CD8-positive, alpha-beta T cell (primary cell): ENCODE measurements at regions of chr10 and their contacts with region 1.

Region 1: DNA sequence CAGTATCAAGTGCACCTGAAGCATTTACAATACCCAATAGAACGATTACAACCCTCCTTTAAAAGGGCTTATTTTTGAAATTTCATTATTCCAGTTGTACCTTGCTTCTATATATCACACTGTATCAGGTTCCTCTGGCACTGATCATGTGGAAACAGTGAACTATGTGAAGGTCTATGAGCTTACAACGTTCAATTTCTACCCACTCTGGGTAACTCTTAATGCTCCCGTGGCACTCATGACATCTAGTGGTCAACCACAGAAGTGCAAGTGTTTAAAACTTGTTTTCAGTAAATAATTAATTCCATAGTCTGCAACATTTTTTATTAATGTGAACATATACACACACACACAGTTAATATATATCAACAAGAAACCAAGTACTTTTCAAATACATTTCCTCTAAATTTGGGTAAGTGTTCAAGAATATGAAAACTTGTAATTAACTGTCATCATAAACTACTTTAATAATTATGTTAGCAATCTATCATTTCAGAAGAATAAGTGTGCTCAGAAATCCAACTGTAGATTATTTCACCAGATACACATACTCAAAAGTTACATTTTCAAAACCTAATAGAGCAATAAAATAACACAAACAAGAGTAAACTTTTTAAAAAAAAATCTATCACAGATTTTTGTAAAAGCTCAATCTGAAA is 61.0 kb downstream of the MPP7 start:
- DNase-seq: peak in 7 of 9 experiments; percentile 12 to 69 (median 23)
- ATAC-seq: peak; percentile 84
- H3K4me3 ChIP-seq: no peak overlapping the region
- H3K4me3 Mint-ChIP-seq: no peak overlapping the region
- H3K27ac ChIP-seq: no peak overlapping the region
- H3K27ac Mint-ChIP-seq: no peak overlapping the region
- H3K4me1 ChIP-seq: peaks cover 15% of the 10 kb centered on the region
- H3K4me1 Mint-ChIP-seq: peaks cover 38% of the 10 kb centered on the region
- H3K27me3 ChIP-seq: no peaks in the 10 kb centered on the region
- H3K27me3 Mint-ChIP-seq: no peaks in the 10 kb centered on the region
- CTCF ChIP-seq: peak; percentile 91

Region 2: GRCh38 chr10:27345455-27345920 is 896.4 kb before region 1 on chr10:
- CTCF ChIA-PET with region 1: no interaction called
- POLR2A ChIA-PET with region 1: no interaction called
- intact Hi-C with region 1: no loop called
- DNase-seq: no peak
- ATAC-seq: no peak
- H3K4me3 ChIP-seq: no peak overlapping the region
- H3K4me3 Mint-ChIP-seq: no peak overlapping the region
- H3K27ac ChIP-seq: no peak overlapping the region
- H3K27ac Mint-ChIP-seq: no peak overlapping the region
- H3K4me1 ChIP-seq: no peaks in the 10 kb centered on the region
- H3K4me1 Mint-ChIP-seq: peaks cover 1% of the 10 kb centered on the region
- H3K27me3 ChIP-seq: no peaks in the 10 kb centered on the region
- H3K27me3 Mint-ChIP-seq: peaks cover 15% of the 10 kb centered on the region
- CTCF ChIP-seq: no peak

Region 3: DNA sequence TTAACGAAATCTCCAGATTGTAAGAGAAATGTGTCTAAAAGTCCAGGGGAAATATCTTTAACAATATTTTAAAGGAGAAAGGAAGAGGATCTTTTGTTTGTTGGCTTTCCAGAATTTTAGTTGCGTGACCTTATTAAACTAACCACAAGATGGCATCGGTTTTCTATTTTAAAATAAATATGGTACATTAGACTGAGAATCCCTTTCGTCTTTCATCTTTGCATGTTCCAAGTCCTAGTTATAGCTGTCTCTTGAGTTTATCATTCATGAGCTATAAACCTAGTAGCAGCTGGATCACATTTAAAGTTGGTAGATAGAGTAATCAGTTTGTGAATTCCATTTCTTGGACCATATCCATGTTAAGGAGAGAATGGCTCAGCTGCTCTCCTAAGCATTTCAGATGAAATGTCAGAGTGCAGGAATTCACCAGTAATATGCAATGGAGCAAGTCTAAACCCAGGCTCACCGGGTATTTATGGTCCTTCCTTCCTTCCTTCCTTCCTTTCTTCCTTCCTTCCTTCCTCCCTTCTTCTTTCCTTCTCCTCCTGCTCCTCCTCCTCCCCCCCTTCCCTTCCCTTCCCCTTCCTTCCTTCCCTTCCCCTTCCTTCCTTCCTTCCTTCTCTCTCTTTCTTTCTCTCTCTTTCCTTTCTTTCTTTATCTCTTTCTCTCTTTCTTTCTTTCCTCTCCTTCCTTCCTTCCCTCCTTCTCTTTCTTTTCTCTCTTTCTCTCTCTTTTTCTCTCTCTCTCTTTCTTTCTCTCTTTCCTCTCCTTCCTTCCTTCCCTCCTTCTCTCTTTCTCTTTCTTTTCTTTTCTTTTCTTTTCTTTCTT is 795.6 kb before region 1 on chr10:
- CTCF ChIA-PET with region 1: interaction called, 3 read pairs
- POLR2A ChIA-PET with region 1: no interaction called
- intact Hi-C with region 1: loop called (anchors 1 to 2 kb)
- DNase-seq: peak in 2 of 9 experiments; percentile 38 to 60
- ATAC-seq: peak; percentile 46
- H3K4me3 ChIP-seq: no peak overlapping the region
- H3K4me3 Mint-ChIP-seq: no peak overlapping the region
- H3K27ac ChIP-seq: no peak overlapping the region
- H3K27ac Mint-ChIP-seq: no peak overlapping the region
- H3K4me1 ChIP-seq: peaks cover 9% of the 10 kb centered on the region
- H3K4me1 Mint-ChIP-seq: peaks cover 21% of the 10 kb centered on the region
- H3K27me3 ChIP-seq: no peaks in the 10 kb centered on the region
- H3K27me3 Mint-ChIP-seq: no peaks in the 10 kb centered on the region
- CTCF ChIP-seq: peak; percentile 61

Region 4: GRCh38 chr10:27742195-27743011 is 499.5 kb before region 1 on chr10:
- CTCF ChIA-PET with region 1: interaction called, 40 read pairs
- POLR2A ChIA-PET with region 1: no interaction called
- intact Hi-C with region 1: loop called (anchors 1 kb)
- DNase-seq: peak; percentile 55 to 85 (median 78)
- ATAC-seq: peak; percentile 82
- H3K4me3 ChIP-seq: peak overlapping the region; percentile 42 to 80
- H3K4me3 Mint-ChIP-seq: peak overlapping the region; percentile 87
- H3K27ac ChIP-seq: no peak overlapping the region
- H3K27ac Mint-ChIP-seq: no peak overlapping the region
- H3K4me1 ChIP-seq: peaks cover 57% of the 10 kb centered on the region
- H3K4me1 Mint-ChIP-seq: peaks cover 43% of the 10 kb centered on the region
- H3K27me3 ChIP-seq: peaks cover 53 to 65% of the 10 kb centered on the region in 2 experiments
- H3K27me3 Mint-ChIP-seq: peaks cover 57% of the 10 kb centered on the region
- CTCF ChIP-seq: peak; percentile 78

Region 5: DNA sequence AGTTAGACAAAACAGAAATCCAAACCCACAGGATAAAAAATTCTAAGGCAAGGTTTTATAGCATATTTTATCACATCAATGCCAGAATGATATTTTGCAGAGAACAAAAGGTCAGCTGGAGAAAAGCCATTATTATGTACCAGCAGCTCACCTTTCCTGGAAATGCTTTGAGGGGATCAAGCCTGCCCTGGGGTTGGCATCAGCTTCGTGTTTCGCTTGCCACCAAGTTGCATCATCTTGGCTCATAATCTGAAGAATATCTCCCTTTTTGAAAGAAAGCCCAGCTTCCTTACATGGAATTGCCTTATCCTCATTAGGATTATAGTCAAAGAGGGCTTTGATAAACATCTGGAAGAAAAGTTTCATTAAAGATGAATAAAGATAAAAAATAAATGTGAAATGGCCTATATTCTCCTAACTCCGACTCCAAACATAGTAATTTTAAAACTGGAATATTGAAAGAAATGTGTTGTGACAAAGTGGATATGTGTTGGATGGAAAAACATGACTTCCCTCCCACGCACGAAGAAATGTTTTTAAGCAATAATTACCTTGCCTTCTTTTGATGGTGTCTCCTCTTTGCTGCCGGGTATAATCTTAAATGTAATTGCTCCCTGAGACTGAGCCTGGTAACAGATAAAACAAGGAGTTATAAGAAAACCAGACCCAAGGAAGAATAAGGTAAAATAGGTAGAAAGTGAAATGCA is 121.7 kb before region 1 on chr10:
- CTCF ChIA-PET with region 1: no interaction called
- POLR2A ChIA-PET with region 1: no interaction called
- intact Hi-C with region 1: no loop called
- DNase-seq: no peak
- ATAC-seq: no peak
- H3K4me3 ChIP-seq: no peak overlapping the region
- H3K4me3 Mint-ChIP-seq: no peak overlapping the region
- H3K27ac ChIP-seq: no peak overlapping the region
- H3K27ac Mint-ChIP-seq: no peak overlapping the region
- H3K4me1 ChIP-seq: no peaks in the 10 kb centered on the region
- H3K4me1 Mint-ChIP-seq: no peaks in the 10 kb centered on the region
- H3K27me3 ChIP-seq: no peaks in the 10 kb centered on the region
- H3K27me3 Mint-ChIP-seq: no peaks in the 10 kb centered on the region
- CTCF ChIP-seq: no peak

Region 6: GRCh38 chr10:28151636-28152035 is 90.2 kb before region 1 on chr10:
- CTCF ChIA-PET with region 1: no interaction called
- POLR2A ChIA-PET with region 1: interaction called, 11 read pairs
- intact Hi-C with region 1: no loop called
- DNase-seq: no peak
- ATAC-seq: no peak
- H3K4me3 ChIP-seq: no peak overlapping the region
- H3K4me3 Mint-ChIP-seq: no peak overlapping the region
- H3K27ac ChIP-seq: no peak overlapping the region
- H3K27ac Mint-ChIP-seq: no peak overlapping the region
- H3K4me1 ChIP-seq: no peaks in the 10 kb centered on the region
- H3K4me1 Mint-ChIP-seq: peaks cover 4% of the 10 kb centered on the region
- H3K27me3 ChIP-seq: no peaks in the 10 kb centered on the region
- H3K27me3 Mint-ChIP-seq: no peaks in the 10 kb centered on the region
- CTCF ChIP-seq: no peak

Region 7: DNA sequence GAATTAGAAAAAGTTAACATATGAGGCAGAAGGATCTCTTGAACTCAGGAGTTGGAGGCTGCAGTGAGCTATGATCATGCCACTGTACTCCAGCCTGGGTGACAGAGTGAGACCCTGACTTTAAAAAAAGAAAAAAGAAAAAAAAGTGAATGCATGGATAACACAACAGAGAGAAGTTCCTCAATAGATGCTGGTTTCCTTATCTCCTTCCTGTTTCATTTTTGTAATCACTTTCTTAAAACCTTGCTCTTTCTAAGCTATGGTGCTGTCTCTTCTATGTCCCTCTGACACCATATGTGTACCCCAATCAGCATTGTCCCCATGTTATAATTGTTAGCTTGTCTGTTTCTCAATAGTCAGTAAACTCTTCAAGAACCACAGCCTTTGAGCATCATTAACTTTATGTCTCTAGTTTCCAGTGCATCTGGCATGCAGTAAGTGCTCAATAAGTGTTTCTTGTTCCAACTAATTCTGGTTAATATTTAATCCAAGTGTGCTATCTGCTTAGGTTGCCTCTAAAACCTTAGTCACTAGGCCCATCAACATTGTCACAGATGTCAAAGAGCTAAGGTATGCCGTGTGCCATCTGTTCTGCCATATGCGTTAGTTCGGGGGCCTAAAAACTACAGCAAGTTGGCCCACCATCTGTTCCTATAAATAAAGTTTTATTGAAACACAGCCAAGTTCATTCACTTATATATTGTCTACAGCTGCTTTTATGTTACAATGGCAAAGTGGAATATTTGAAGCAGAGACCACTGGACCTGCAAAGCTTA is 24.8 kb after region 1 on chr10:
- CTCF ChIA-PET with region 1: interaction called, 10 read pairs
- POLR2A ChIA-PET with region 1: interaction called, 3 read pairs
- intact Hi-C with region 1: no loop called
- DNase-seq: no peak
- ATAC-seq: no peak
- H3K4me3 ChIP-seq: no peak overlapping the region
- H3K4me3 Mint-ChIP-seq: no peak overlapping the region
- H3K27ac ChIP-seq: no peak overlapping the region
- H3K27ac Mint-ChIP-seq: no peak overlapping the region
- H3K4me1 ChIP-seq: no peaks in the 10 kb centered on the region
- H3K4me1 Mint-ChIP-seq: peaks cover 32% of the 10 kb centered on the region
- H3K27me3 ChIP-seq: no peaks in the 10 kb centered on the region
- H3K27me3 Mint-ChIP-seq: no peaks in the 10 kb centered on the region
- CTCF ChIP-seq: no peak